Vagina (tissue), 2 donors: ENCODE measurements at regions of chr1 and their contacts with region 1.

Region 1: GRCh38 chr1:87523466-87523865 is 194.8 kb downstream of the LMO4 start:
- DNase-seq: no peak
- H3K4me3 ChIP-seq: no peak overlapping the region
- H3K27ac ChIP-seq: peak overlapping the region; percentile 37
- H3K4me1 ChIP-seq: no peaks in the 10 kb centered on the region
- H3K27me3 ChIP-seq: no peaks in the 10 kb centered on the region
- CTCF ChIP-seq: no peak
- POLR2A ChIP-seq: no peak

Region 2: GRCh38 chr1:87328272-87329050 is 195.0 kb before region 1 on chr1 and contains the start of gene LMO4:
- intact Hi-C with region 1: loop called (anchors 5 kb)
- DNase-seq: peak in 1 of 2 donors; percentile 99
- H3K4me3 ChIP-seq: peak within 1 kb of the TSS; percentile 73 to 78
- H3K27ac ChIP-seq: peak within 1 kb of the TSS; percentile 98
- H3K4me1 ChIP-seq: peaks cover 34% of the 10 kb centered on the region
- H3K27me3 ChIP-seq: no peaks in the 10 kb centered on the region
- CTCF ChIP-seq: peak in 1 of 3 experiments; percentile 26
- POLR2A ChIP-seq: peak; percentile 45 to 89
- total RNA-seq, gene LMO4: 53.8 TPM